WTC11 (cell line): ENCODE measurements at regions of chr15 and their contacts with region 1.

Region 1: DNA sequence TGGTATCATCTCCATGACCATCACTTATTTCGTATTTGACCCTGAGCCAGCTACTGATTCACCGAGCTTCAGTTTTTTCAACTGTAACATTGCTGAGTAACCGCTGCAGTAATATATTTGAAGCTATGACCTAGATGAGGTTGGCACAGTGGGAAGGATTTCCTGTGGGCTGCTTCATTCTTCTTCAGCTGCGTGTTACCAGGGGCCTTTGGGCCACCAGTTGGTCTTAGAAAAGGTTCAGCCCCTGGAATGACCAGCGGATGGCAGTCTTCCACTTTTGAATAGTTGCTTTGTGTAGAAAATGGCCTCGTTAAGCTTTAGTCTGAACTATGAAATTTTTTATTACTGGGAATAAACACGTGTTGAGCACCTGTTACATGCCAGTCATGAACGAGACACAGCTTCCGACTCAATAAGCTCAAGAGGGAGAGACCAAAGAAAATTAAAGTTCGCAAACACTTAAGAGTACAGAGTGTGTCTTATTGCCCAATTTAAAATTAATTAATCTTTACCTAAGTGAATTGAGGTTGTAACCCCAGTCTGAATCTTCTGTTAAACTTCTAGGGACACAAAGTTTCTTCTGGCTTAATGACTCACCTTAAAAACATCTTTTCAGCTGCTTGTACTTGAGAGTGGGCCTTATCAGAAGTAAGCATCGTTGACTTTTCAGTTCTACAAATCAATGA is 57.6 kb upstream of the NR2E3 start:
- DNase-seq: peak; percentile 42
- ATAC-seq: peak; percentile 56; the same call in 1 of the 2 replicates
- H3K4me3 Mint-ChIP-seq: no peak overlapping the region
- H3K27ac Mint-ChIP-seq: no peak overlapping the region
- H3K4me1 Mint-ChIP-seq: no peaks in the 10 kb centered on the region
- H3K27me3 Mint-ChIP-seq: no peaks in the 10 kb centered on the region
- CTCF ChIP-seq: peak; percentile 16; the same call in 1 of the 2 replicates

Region 2: DNA sequence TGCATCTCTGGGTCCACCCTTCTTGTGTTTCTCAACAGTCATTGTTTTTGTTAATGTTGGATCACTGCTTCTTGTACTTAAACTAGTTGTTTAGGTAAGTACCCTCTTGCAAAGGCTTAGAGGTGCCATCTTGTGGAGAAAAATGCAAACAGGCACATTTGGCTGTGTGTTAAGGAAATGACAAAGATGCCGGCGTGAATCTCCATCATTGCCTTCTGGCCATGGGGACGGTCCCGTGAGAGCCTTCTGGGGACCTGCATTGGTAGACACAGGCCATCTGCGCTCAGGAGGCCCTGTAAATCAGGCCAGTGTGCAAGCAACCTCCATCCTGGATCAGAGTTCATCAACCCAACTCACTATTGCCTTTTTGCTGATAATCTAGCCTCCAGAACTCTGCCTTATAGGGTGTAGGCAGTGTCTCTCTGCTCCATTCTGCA is 101.0 kb before region 1 on chr15:
- CTCF ChIA-PET with region 1: no interaction called
- POLR2A ChIA-PET with region 1: no interaction called
- DNase-seq: peak; percentile 37
- ATAC-seq: peak; percentile 72
- H3K4me3 Mint-ChIP-seq: no peak overlapping the region
- H3K27ac Mint-ChIP-seq: no peak overlapping the region
- H3K4me1 Mint-ChIP-seq: peaks cover 50% of the 10 kb centered on the region
- H3K27me3 Mint-ChIP-seq: no peaks in the 10 kb centered on the region
- CTCF ChIP-seq: no peak

Region 3: GRCh38 chr15:71662306-71662705 is 90.4 kb before region 1 on chr15:
- CTCF ChIA-PET with region 1: no interaction called
- POLR2A ChIA-PET with region 1: no interaction called
- DNase-seq: no peak
- ATAC-seq: no peak
- H3K4me3 Mint-ChIP-seq: no peak overlapping the region
- H3K27ac Mint-ChIP-seq: no peak overlapping the region
- H3K4me1 Mint-ChIP-seq: peaks cover 2% of the 10 kb centered on the region
- H3K27me3 Mint-ChIP-seq: no peaks in the 10 kb centered on the region
- CTCF ChIP-seq: no peak

Region 4: DNA sequence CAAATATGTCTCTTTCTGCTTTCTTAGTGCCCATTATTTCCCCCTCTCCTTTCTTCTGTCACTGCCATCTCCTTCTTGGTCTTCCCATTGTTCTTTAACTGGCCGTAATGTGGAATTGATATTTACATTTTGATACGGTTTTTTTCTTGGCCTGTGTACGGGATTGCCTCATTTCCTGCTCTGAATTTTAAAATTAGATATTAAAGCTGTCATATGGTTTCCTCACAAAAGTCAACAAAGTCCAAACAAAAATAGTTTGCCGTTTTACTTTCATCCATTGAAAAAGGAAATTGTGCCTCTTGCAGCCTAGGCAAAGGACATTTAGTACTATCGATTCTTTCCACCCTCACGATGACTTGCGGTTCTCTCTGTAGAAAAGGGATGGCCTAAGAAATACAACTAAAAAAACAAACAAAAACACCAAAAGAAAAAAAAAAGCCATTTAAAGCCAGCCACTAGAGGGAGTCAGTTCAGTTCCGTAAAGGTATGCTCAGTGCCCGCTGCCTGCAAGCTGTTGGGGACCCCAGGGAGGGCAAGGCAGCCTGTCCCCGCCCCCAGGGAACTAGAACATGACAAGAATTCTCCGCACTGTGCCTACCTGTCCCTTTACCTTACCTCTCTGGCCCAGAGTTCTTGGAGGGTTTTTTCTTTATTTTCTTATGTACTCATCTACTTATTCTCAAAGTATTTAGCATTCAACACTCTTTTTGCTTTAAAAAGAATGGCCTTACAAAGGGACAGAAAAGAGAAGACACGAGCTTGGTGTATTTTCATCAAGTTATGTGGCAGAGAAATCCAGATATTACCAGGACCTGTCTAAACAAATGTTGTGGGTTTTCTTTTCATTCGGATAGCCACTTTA is 27.6 kb after region 1 on chr15:
- CTCF ChIA-PET with region 1: interaction called, 22 read pairs
- POLR2A ChIA-PET with region 1: no interaction called
- DNase-seq: peak; percentile 81
- ATAC-seq: peak; percentile 95
- H3K4me3 Mint-ChIP-seq: no peak overlapping the region
- H3K27ac Mint-ChIP-seq: peak overlapping the region; percentile 63
- H3K4me1 Mint-ChIP-seq: peaks cover 9% of the 10 kb centered on the region
- H3K27me3 Mint-ChIP-seq: no peaks in the 10 kb centered on the region
- CTCF ChIP-seq: peak; percentile 75

Region 5: GRCh38 chr15:71806452-71806931 is 53.7 kb after region 1 on chr15:
- CTCF ChIA-PET with region 1: interaction called, 43 read pairs
- POLR2A ChIA-PET with region 1: no interaction called
- DNase-seq: no peak
- ATAC-seq: no peak
- H3K4me3 Mint-ChIP-seq: peak overlapping the region; percentile 60
- H3K27ac Mint-ChIP-seq: peak overlapping the region; percentile 87; the same call in 1 of the 2 replicates
- H3K4me1 Mint-ChIP-seq: peaks cover 48% of the 10 kb centered on the region
- H3K27me3 Mint-ChIP-seq: no peaks in the 10 kb centered on the region; the same call in 1 of the 2 replicates
- CTCF ChIP-seq: no peak

Region 6: DNA sequence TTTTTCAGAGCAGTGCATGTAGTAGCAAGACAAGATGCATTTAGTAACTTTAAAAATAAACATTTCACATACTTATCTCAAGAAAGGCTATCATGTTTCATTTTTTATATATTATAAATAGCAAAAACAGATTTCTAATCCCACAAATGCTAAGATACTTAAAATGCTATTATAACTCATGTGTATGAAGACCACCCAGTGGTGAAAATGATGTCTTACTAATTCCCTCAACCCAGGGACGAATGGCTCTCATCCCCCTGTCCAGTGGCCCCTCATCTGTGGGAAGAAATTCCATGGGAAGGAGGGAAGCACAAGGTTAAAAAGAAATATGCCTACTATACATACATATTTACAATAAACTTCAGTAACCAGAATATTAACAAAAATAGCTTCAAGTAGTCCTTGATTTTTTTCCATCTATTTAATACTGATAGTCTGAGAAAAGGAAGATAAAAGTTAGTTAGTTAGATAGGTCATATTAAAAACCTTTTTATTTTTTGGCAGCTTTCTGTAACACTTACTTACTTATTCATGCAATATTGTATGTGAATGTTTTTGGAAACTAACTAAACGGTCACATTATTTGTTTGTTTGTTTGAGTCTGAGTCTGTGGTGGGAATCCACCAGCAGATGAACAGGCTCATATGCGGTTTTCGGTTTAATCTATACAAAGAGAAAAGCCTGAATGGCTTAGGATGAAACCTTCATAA is 72.4 kb after region 1 on chr15:
- CTCF ChIA-PET with region 1: no interaction called
- POLR2A ChIA-PET with region 1: no interaction called
- DNase-seq: no peak
- ATAC-seq: no peak
- H3K4me3 Mint-ChIP-seq: no peak overlapping the region
- H3K27ac Mint-ChIP-seq: no peak overlapping the region
- H3K4me1 Mint-ChIP-seq: peaks cover 23% of the 10 kb centered on the region
- H3K27me3 Mint-ChIP-seq: no peaks in the 10 kb centered on the region
- CTCF ChIP-seq: no peak

Region 7: DNA sequence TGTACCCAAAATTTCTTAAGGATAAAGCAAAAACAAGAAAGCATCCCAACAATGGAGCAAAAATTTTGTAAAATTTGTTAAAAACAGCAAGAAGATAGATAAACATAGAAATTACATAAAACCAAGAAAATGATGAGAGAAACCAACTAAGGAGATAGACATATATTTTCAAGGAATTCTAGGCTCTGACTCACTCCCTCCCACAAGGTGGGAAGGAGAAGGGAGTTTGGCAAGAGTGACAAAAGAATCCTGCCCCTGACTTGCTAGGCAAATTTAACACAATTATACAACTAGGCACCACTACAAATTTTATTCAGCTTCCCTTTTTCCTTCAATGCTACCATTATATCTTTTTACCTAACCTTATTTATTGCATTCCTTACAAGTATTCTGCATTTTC is 294.3 kb after region 1 on chr15:
- CTCF ChIA-PET with region 1: no interaction called
- POLR2A ChIA-PET with region 1: no interaction called
- DNase-seq: no peak
- ATAC-seq: no peak
- H3K4me3 Mint-ChIP-seq: no peak overlapping the region
- H3K27ac Mint-ChIP-seq: no peak overlapping the region
- H3K4me1 Mint-ChIP-seq: no peaks in the 10 kb centered on the region
- H3K27me3 Mint-ChIP-seq: no peaks in the 10 kb centered on the region
- CTCF ChIP-seq: no peak

Region 8: DNA sequence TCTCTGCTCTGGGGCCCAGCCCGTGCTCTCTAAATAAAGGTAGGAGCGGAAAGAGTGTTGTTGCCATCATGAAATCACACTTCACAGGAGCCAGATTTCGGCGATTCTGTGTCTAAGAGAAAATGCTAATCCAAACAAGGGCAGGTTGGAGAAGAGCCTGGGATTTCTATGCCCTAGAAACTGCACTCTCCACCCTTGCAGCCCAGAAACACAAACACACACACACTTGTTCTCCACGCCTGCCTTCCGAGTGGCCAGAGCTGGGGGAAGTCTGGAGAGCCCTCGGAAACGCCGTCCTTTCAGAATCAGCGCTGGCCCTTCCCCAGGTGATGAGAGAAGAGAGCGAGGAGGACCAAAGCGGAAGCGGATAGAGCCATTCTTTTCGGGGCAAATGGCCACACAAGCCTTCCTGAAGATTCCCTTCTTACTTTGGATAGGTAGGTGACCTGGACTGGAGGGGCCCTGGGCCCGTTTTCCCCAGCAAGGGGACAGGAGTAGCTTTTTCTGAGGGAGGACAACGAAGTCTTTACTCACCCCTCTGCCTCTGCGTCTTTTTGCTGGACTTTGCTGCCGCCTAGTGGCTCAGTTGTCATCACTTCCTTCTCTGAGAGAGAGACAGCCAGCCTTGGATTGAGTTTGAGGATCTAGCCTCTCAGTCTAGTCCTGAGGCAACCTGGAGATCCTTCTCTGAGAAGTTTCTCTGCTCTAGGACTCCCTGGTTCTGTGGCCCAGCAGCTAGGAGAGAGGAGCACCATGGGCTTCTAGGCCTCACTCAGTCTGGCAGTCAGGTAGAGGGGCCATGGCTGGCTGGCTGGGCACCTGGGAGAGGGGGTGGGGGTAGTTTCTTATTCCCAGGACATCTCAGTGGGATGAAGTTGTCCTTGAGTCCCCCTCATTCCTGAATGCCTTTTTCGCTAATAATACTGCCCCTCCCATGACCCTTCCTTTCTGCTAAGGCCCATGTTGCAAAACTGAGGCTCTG is 403.2 kb after region 1 on chr15:
- CTCF ChIA-PET with region 1: interaction called, 15 read pairs
- POLR2A ChIA-PET with region 1: no interaction called
- DNase-seq: peak; percentile 91
- ATAC-seq: peak; percentile 94
- H3K4me3 Mint-ChIP-seq: peak overlapping the region; percentile 27
- H3K27ac Mint-ChIP-seq: no peak overlapping the region
- H3K4me1 Mint-ChIP-seq: peaks cover 9% of the 10 kb centered on the region
- H3K27me3 Mint-ChIP-seq: no peaks in the 10 kb centered on the region; the same call in 1 of the 2 replicates
- CTCF ChIP-seq: peak; percentile 84